Activated CD4-positive, alpha-beta memory T cell treated with anti-CD3 and anti-CD28 coated beads for 36 hours (primary cell): ENCODE measurements at regions of chr11 and their contacts with region 1.

Region 1: DNA sequence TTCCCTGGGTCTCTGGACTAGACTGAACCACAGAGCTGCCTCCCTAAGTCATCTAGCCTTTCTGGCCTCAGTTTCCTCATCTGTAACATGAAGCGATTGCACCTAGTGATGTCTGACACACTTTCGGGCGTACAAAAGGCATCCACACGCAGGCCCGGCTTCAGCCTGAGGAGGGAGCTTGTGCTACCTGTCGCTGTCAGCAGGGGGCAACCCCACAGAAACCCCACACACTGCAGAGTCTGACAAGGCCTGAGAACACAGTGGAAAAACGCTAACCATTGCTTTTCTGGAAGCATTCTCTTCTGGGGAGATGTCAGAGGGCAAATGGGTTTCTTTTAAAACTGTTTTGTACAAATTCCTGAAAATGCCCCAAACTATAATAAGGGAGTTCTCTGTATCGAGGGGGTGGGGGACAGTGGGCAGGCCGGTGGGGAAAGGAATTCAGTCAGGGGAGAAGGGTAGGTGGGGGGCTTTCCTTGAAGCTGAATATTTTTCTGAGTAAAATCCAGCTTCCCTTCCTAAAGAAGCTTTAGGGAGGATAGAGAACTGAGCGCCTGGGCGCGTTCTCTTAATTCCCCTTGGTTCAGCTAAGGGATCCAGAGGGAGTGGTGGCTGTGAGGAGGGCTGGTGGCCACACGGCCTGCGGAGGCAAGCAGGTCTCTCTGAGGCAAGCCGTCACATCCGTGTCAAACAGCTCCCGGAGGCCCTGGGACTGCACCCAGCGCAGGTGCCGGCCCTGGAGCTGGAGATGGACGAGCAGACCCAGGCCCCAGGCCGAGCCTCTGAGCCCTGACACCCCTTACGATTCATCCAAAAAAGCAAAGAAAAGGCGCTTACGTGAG is 533 bp downstream of the ELF5 start:
- DNase-seq: peak; percentile 71
- H3K4me3 Mint-ChIP-seq: no peak overlapping the region
- H3K27ac Mint-ChIP-seq: no peak overlapping the region
- H3K4me1 Mint-ChIP-seq: no peaks in the 10 kb centered on the region
- H3K27me3 Mint-ChIP-seq: no peaks in the 10 kb centered on the region

Region 2: GRCh38 chr11:34468209-34468841 is 44.7 kb before region 1 on chr11:
- CTCF ChIA-PET with region 1: no interaction called
- POLR2A ChIA-PET with region 1: no interaction called
- intact Hi-C with region 1: no loop called
- DNase-seq: peak; percentile 67
- H3K4me3 Mint-ChIP-seq: no peak overlapping the region
- H3K27ac Mint-ChIP-seq: no peak overlapping the region
- H3K4me1 Mint-ChIP-seq: peaks cover 7% of the 10 kb centered on the region
- H3K27me3 Mint-ChIP-seq: no peaks in the 10 kb centered on the region

Region 3: GRCh38 chr11:34492806-34493414 is 20.2 kb before region 1 on chr11:
- CTCF ChIA-PET with region 1: interaction called, 12 read pairs
- POLR2A ChIA-PET with region 1: no interaction called
- intact Hi-C with region 1: no loop called
- DNase-seq: peak; percentile 51
- H3K4me3 Mint-ChIP-seq: no peak overlapping the region
- H3K27ac Mint-ChIP-seq: no peak overlapping the region
- H3K4me1 Mint-ChIP-seq: no peaks in the 10 kb centered on the region
- H3K27me3 Mint-ChIP-seq: peaks cover 3% of the 10 kb centered on the region

Region 4: GRCh38 chr11:34558211-34558610 is 45.1 kb after region 1 on chr11:
- CTCF ChIA-PET with region 1: no interaction called
- POLR2A ChIA-PET with region 1: no interaction called
- intact Hi-C with region 1: no loop called
- DNase-seq: no peak
- H3K4me3 Mint-ChIP-seq: no peak overlapping the region
- H3K27ac Mint-ChIP-seq: no peak overlapping the region
- H3K4me1 Mint-ChIP-seq: no peaks in the 10 kb centered on the region
- H3K27me3 Mint-ChIP-seq: peaks cover 32% of the 10 kb centered on the region

Region 5: DNA sequence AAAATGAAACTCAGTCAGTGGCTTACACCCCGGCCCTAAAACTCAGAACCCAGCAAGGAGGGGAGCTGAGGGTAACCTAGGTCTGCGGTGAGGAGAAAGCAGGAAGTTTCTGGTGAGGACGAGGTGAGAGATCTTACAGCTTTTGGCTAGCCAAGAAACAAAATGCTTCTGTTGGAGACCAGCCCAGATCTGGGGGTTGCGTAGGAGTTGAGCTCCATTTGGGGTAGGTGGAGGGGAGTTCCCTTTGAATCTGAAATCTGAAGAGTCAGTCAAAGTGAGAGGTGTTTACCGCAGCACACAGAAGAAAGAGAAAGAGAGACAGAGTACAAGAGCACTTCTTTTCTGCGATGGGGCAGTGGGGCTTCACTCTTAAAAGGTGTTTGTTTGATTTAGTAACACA is 137.5 kb after region 1 on chr11:
- CTCF ChIA-PET with region 1: no interaction called
- POLR2A ChIA-PET with region 1: no interaction called
- intact Hi-C with region 1: no loop called
- DNase-seq: peak; percentile 95
- H3K4me3 Mint-ChIP-seq: peak overlapping the region; percentile 55
- H3K27ac Mint-ChIP-seq: peak overlapping the region; percentile 70
- H3K4me1 Mint-ChIP-seq: peaks cover 48% of the 10 kb centered on the region
- H3K27me3 Mint-ChIP-seq: peaks cover 42% of the 10 kb centered on the region